ENCODE measurements at regions of chr11 and their contacts with region 1.

Region 1: GRCh38 chr11:47280860-47281259 is 10.9 kb downstream of the MADD start:
- DNase-seq: no peak
- CTCF ChIP-seq: no peak

Region 2: DNA sequence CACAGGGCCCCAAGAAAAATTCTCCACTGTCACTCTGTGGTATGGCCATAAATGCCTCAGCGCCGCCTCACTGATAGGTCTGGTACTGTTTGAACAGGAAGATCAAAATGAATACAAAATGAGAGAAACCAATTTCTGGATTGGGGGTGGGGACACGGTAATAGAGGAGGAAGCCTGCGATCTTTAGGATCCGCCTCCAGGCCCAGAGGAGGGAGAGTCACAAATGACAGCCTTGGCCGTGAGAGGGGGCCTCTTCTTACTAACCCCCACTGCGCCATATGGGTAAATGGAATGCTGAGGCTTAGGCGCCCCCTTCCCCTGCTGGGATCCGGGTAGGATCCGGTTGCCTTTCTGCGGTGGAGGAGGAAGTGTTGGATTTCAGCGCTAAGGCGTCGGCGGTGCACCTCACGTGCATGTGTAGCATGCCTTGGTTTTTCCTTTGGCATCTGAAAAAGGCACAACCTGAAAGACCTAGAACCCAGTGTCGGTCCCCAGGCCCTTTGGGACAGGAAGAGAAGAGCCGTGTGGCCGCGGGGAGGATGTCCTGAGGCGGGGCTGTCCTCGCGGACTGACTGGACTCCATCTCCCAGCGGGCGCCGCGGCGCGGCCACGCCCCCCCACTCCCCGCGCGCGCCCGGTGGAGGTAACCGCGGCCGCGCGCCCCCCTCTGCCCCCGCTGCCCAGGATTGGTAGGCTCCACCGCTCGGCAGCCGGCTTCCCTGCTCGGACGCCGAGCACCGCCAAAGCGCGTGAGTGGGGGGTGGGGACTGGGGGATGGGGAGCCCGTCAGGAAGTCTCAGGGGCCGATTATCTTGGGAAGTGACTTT is 11.6 kb before region 1 on chr11:
- CTCF ChIA-PET with region 1: interaction called, 10 read pairs
- POLR2A ChIA-PET with region 1: no interaction called
- DNase-seq: peak; percentile 93
- CTCF ChIP-seq: no peak